ENCODE measurements at regions of chr22 and their contacts with region 1.

Region 1: DNA sequence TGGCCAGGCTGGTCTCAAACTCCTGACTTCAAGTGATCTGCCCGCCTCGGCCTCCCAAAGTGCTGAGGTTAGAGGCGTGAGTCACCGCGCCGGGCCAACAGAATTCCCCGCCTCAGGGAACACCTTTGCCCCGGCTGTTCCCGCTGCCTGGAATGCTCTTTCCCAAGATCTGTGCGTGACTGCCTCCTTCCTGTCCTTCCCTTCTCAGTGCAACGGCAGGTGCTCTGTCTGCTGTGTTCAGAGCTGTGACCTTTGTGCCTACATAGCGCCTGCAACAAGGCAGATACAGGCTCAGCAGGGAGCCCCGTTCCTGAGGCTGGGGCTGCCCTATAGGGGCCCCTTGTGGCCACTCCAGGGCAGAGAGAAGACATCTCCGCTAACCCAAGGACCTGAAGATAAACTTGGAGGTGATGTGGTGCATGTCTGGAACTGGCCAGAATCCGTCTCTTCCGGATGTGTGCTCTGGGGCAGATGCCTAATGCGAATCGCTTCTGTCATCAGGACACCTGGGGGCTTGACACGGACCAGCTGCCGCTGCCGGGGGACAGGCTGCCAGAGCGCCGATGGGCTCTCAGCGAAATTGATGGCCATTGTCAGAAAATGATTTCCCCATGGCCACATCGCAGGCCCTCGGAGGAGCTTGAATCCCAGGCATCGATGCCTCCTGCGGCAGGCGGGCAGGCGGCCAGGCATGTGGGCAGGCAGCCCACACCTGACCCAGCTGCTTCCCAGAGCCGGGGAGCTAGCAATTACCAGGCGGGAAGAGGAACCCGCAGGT is 43.5 kb upstream of the TCF20 start:
- DNase-seq: peak; percentile 75
- H3K4me3 ChIP-seq: no peak overlapping the region
- H3K27ac ChIP-seq: no peak overlapping the region
- H3K4me1 ChIP-seq: peaks cover 0 to 45% (median 35%) of the 10 kb centered on the region in 4 donors
- H3K27me3 ChIP-seq: no peaks in the 10 kb centered on the region
- CTCF ChIP-seq: peak in 3 of 4 experiments; percentile 15 to 28 (median 21)
- EP300 ChIP-seq: no peak
- POLR2A ChIP-seq: no peak

Region 2: GRCh38 chr22:42343551-42344081 is 29.6 kb after region 1 on chr22:
- intact Hi-C with region 1: loop called (anchors 2 kb)
- DNase-seq: no peak
- H3K4me3 ChIP-seq: peak overlapping the region; percentile 25 to 55 (median 50)
- H3K27ac ChIP-seq: peak overlapping the region; percentile 83 to 93 (median 88)
- H3K4me1 ChIP-seq: peaks cover 0 to 40% (median 37%) of the 10 kb centered on the region in 4 donors
- H3K27me3 ChIP-seq: no peaks in the 10 kb centered on the region
- CTCF ChIP-seq: no peak
- EP300 ChIP-seq: no peak
- POLR2A ChIP-seq: no peak

Region 3: DNA sequence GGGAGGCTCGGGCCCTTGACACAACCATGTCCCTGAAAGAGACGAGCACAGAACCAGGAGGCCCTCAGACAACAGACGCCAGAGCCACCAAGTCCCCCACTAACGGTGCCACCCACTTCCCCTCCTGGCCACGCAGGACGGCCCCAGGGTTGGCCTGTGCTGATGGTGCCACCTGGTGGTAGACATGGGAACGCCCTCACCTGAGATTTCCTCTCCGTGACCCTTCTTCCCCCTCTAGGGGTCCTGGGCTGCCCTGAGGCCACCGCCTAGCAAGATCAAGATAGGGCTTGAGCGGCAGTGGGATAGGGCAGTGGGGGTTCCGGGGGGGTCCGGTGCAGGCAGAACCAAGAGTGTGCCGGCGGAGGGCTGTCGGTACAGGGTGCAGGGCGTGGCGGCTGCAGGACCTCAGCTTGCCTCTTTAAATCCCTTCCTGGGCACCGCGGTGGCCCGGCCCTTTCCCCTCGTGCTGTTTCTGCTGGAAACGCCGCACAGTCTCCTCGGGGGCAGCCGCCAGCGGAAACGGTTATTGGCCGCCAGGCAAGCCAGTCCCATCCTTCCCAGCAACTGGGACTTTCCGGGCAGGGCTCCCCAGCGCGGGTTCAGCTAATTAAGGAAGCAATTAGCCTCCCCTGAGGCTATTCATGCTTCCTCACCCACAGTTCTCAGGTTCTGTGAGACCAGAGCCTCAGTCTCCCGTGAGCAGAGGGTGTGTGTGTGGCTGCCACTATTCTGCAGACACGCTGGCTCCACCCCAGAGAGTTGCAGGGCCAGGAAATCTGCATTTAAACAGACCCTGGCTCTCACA is 123.7 kb after region 1 on chr22:
- intact Hi-C with region 1: loop called (anchors 5 kb)
- DNase-seq: peak; percentile 87
- H3K4me3 ChIP-seq: peak overlapping the region in 3 of 4 donors; percentile 30 to 45 (median 38)
- H3K27ac ChIP-seq: peak overlapping the region in 1 of 4 donors; percentile 16
- H3K4me1 ChIP-seq: peaks cover 0 to 25% (median 22%) of the 10 kb centered on the region in 4 donors
- H3K27me3 ChIP-seq: peaks cover 0 to 6% (median 4%) of the 10 kb centered on the region in 3 donors
- CTCF ChIP-seq: peak; percentile 95 to 99 (median 98)
- EP300 ChIP-seq: no peak
- POLR2A ChIP-seq: no peak

Measured in sigmoid colon (tissue), 7 donors.